ENCODE measurements at regions of chr3 and their contacts with region 1.

Region 1: GRCh38 chr3:187164885-187165543 is 25.7 kb upstream of the RPL39L start:
- DNase-seq: no peak

Region 2: DNA sequence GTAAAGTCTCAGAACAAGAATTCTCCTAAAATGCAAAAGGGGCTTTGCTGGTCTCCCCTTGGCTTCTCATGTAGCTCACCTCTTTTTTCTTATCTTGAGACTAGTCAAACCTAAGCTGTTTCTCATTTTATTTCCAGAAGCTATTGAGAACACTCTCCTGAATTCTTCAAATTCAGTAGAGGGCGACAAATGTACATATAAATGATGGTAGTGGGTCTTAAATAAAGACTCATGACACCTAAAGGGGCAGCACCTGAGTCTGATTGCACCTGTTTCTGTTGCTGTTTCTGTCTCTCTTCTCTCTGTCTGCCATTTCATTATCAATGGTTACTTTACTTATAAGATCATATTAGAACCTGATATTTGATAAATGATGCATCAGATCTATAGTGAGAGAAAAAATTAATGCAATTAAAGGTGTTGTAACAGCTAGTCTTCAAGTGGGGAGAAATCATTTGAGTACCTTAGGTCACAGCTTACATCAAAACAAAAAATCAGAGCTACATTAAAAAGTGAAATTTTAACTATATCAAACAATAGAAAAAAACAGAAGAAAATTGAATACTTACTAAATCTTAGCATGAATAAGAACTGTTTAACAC is 315.5 kb before region 1 on chr3:
- intact Hi-C with region 1: loop called (anchors 2 kb)
- DNase-seq: no peak

Region 3: DNA sequence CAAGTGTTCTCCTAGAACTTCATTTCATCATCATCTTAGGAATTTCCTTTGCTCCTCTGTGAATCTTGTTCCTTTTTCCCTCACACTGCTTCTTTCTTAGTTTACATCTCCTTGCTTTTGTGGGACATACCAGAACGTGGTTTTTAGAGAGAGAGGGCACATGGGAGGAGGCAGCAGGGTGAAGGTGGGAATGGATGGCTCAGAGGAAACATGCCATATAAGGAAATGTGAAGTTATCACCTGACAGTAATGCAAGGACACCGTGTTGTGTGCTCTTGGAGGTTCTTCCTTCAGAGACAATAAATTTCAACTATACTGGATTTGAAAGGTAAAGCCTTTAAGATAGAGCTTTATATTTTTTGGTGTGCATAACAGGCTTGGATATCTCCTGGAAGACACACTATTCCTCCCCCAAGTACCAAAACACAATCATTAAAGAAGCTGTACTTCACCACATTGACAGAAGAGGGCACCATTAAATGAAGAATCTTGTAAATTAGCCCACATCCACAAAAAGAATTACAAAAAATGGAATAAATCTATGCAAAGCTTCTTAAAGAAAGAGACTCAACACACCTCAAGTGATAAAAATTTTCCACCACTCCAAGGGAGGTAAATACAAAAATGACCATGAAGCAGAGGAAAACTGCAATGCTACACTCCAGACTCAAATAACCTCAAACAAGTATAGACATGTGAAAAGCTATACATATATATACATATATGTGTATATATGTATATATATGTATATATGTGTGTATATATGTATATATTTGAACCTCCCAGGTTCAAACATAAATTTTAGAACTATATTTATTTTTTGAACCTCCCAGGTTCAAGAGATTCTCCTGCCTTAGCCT is 51.9 kb before region 1 on chr3:
- intact Hi-C with region 1: loop called (anchors 2 kb)
- DNase-seq: no peak

Region 4: GRCh38 chr3:187186801-187187421 is 21.9 kb after region 1 on chr3:
- intact Hi-C with region 1: no loop called
- DNase-seq: no peak